ENCODE measurements at regions of chr18 and their contacts with region 1.

Region 1: GRCh38 chr18:23166891-23167541 is 31.7 kb downstream of the CABLES1 start:
- DNase-seq: no peak
- ATAC-seq: no peak
- H3K4me3 ChIP-seq: no peak overlapping the region
- H3K27ac ChIP-seq: 0 out of 2 replicates have a peak overlapping the region, but pooled peaks have one; percentile 8
- H3K4me1 ChIP-seq: peaks cover 3% of the 10 kb centered on the region; the same call in 1 of the 2 replicates
- H3K27me3 ChIP-seq: no peaks in the 10 kb centered on the region
- CTCF ChIP-seq: no peak

Region 2: GRCh38 chr18:23012249-23012648 is 154.8 kb before region 1 on chr18:
- CTCF ChIA-PET with region 1: no interaction called
- POLR2A ChIA-PET with region 1: interaction called, 14 read pairs
- in situ Hi-C with region 1: no loop called
- intact Hi-C with region 1: no loop called
- DNase-seq: no peak
- ATAC-seq: no peak
- H3K4me3 ChIP-seq: no peak overlapping the region
- H3K27ac ChIP-seq: no peak overlapping the region
- H3K4me1 ChIP-seq: no peaks in the 10 kb centered on the region
- H3K27me3 ChIP-seq: no peaks in the 10 kb centered on the region
- CTCF ChIP-seq: no peak

Region 3: DNA sequence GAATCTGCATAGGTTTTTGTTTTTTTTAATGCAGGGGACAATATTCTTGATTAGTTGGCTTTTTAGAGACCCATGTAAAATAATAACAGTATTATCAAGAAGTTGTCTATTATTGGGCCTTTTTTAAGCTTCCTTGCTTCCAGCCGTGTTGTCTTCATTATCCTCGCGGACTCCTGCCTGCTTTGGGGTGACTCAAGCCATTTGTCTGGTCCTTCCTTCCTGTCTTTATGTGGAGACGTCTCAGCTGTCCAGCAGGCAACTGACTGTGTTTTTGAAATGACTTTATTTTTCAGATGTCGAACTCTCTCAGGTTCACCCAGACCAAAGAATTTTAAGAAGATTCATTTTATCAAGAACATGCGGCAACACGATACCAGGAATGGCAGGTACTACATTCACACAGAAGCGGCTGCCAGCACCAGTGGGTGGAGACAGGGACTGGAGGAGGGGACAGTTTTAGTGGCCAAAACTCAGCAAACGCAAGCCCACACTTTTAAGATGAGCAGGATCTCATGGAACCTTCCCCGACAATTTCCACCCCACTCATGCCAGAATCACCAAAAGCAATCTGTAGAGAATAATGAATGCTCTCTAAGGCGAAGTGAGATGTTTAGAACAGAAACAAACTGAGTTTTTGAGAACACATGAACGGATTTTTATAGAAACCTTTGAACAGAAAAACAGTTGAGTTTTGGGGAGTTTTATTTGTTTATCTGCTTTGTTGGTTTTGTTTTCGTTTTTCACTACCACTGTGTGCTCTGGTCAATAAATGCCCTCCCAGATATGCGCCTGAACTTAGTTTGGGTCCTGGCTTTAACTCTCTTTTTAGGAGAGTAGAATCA is 27.4 kb after region 1 on chr18:
- CTCF ChIA-PET with region 1: no interaction called
- POLR2A ChIA-PET with region 1: interaction called, 18 read pairs
- in situ Hi-C with region 1: no loop called
- intact Hi-C with region 1: no loop called
- DNase-seq: no peak
- ATAC-seq: no peak
- H3K4me3 ChIP-seq: no peak overlapping the region
- H3K27ac ChIP-seq: no peak overlapping the region
- H3K4me1 ChIP-seq: no peaks in the 10 kb centered on the region; the same call in 1 of the 2 replicates
- H3K27me3 ChIP-seq: no peaks in the 10 kb centered on the region
- CTCF ChIP-seq: no peak

Measured in Panc1 (cell line).